Tibial artery (tissue), 4 donors: ENCODE measurements at regions of chr9 and their contacts with region 1.

Region 1: GRCh38 chr9:3337515-3338225 is 188.1 kb downstream of the RFX3 start:
- DNase-seq: no peak
- H3K4me3 ChIP-seq: no peak overlapping the region
- H3K27ac ChIP-seq: peak overlapping the region in 1 of 2 donors; percentile 8
- H3K4me1 ChIP-seq: peaks cover 0 to 6% (median 0%) of the 10 kb centered on the region in 4 donors
- H3K27me3 ChIP-seq: no peaks in the 10 kb centered on the region
- CTCF ChIP-seq: no peak

Region 2: DNA sequence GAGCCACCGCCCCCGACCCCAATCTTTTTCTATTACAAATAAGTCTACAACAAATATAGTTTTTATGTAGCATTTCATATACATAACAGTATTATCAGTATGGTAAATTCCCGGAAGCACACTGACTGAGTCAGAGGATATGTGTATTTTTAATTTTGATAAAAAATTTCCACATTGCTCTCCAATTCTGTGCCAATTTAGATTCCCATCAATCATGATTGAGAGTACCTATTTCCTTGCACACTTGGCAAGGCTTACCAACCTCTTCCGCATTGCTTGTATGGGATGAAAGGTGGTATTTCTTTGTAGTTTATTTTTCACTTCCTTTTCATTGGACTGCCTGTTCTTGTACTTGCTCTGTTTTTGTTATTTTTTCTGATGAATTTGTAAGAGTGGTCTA is 16.5 kb before region 1 on chr9:
- intact Hi-C with region 1: loop called (anchors 2 kb)
- DNase-seq: no peak
- H3K4me3 ChIP-seq: no peak overlapping the region
- H3K27ac ChIP-seq: no peak overlapping the region
- H3K4me1 ChIP-seq: no peaks in the 10 kb centered on the region
- H3K27me3 ChIP-seq: no peaks in the 10 kb centered on the region
- CTCF ChIP-seq: no peak

Region 3: DNA sequence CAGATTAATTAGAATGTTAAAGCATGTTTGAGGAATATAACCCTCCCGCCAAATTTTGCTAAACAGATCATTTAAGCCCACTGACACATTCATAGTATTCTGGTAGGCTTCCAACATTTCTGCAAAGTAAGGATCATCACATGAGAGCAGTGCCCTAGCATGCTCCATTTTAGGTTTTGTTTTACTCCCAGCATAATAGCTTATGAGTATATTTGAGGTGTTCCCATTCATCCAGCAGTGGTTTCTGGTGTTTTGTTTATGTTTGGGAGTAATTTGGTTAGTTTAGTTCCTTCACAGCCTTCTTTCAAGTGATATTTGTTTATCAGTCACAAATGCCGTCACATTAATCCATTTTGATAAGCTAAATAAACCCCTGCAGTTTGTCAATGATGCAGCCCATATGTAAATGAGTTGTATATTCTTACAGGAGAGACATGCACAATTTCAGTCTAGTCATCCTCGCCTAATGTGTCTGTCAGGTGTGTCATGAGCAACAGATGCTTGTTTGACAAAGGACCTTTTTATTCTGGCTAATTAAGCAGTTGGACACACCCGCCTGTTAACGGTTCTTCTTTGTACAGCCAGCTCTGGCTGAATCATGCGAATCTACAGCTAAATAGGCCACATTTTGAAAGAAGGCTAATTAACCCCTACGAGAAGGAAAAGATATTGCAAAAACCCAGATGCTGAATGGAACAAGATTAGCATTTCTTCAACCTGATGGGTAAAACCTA is 63.7 kb after region 1 on chr9:
- intact Hi-C with region 1: no loop called
- DNase-seq: no peak
- H3K4me3 ChIP-seq: no peak overlapping the region
- H3K27ac ChIP-seq: no peak overlapping the region
- H3K4me1 ChIP-seq: no peaks in the 10 kb centered on the region
- H3K27me3 ChIP-seq: no peaks in the 10 kb centered on the region
- CTCF ChIP-seq: no peak

Region 4: DNA sequence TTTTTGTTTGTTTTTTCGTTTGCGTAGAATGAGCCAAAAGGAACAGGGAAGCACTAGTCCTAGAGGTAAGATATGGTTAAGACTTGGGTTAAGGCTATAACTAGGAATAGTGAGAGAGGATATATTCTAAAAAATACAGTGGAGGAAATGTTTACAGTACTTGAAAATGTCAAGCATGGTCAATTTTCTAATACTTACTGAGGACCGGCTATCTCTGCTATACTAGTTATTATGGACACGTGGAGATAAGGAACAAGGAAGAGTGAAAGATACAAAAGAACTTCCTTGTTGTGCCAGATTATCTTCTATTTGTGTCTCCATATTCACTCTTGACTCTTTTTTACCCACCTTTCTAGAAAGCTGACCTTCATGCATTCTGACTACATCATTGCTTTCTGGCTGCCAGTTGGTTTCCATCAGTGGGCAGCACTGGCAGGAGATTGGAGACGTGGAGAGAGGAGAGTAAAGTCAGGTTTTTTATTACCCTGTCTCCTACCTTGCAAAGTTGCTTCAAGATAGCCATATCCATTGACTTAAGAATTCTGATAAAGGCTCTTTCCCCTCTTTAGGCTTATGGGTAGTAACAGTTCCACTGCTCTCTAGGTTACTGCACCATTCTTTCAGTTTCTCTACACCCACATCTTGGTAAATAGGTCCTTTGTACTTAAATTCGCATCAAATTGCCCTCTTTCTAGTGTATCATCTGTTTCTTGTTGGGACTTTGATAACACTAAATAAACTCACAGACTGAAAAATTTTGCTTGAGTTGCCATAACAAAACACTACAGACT is 197.1 kb after region 1 on chr9:
- intact Hi-C with region 1: no loop called
- DNase-seq: no peak
- H3K4me3 ChIP-seq: no peak overlapping the region
- H3K27ac ChIP-seq: no peak overlapping the region
- H3K4me1 ChIP-seq: no peaks in the 10 kb centered on the region
- H3K27me3 ChIP-seq: no peaks in the 10 kb centered on the region
- CTCF ChIP-seq: no peak

Region 5: DNA sequence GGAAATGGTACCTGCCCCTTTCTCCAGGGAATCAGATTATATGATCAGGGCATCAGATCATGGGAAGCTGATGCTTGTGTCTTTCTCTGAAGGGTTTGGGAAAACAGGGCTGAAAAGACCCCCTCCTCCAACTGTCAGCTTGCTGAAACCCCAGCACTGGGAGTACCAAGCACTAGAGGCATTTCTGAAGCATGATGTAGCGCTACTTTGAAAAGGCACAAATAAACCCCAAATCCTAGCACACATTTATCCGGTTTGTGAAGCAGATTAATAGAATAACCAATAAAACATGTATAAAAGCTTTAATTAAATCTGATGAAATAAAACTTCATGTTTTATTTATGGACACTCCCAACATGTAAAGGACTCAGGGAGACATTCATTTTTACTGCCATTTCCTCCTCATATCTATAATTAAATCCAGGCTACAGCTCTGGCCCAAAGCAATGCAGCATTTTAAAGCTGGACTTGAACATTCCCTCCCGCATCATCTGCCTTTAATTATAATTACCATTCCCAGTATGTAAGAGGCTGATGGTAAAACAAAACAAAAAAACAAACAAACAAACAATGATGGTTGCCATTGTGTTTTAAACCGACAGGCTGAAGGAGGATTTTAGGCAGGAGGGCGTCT is 486.3 kb after region 1 on chr9:
- intact Hi-C with region 1: no loop called
- DNase-seq: no peak
- H3K4me3 ChIP-seq: no peak overlapping the region
- H3K27ac ChIP-seq: no peak overlapping the region
- H3K4me1 ChIP-seq: no peaks in the 10 kb centered on the region
- H3K27me3 ChIP-seq: no peaks in the 10 kb centered on the region
- CTCF ChIP-seq: no peak